Activated CD4-positive, alpha-beta T cell treated with anti-CD3 and anti-CD28 coated beads, Interleukin-2, amount 10 ng/mL, durations not matched to agents 24 days and 14 days (primary cell): ENCODE measurements at regions of chr5 and their contacts with region 1.

Region 1: DNA sequence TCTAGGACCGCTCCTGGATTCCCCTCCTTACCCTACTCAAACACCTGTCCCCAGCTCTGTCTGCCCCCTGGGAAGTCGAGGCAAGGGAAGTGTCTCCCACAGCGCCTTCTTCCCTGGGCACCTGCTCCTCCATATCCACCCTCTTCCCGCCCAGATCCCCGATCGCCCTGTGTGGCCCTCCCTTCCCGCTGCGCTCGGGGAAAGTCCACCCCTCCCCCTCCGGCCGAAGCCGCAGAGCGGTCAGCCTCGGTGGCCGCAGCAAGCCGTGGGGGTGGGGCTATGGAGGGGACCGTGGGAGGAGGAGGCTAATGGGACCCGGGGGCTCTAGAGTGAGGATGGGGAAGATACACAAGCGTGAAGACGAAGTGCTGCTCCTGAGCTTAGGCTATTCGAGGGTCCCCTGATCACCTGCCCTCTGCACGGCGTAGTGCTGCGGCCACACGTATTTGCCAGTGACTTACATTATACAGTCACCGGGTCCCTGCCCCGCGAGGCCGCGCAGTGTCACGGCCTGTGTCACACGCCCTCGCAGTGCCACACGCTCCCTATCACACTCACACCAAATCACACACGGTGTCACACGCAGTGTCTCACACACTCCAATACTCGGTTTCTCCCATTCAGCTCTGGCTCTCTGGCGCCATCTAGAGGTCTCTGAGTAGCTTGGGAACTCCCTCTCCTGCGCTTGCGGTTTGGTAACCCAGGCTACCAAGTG is 658 bp upstream of the PCDH1 start:
- DNase-seq: peak; percentile 97
- H3K4me3 Mint-ChIP-seq: peak overlapping the region; percentile 79
- H3K27ac Mint-ChIP-seq: peak overlapping the region; percentile 39
- H3K4me1 Mint-ChIP-seq: peaks cover 22% of the 10 kb centered on the region
- H3K27me3 Mint-ChIP-seq: peaks cover 78% of the 10 kb centered on the region

Region 2: GRCh38 chr5:141664732-141665461 is 214.0 kb before region 1 on chr5:
- intact Hi-C with region 1: loop called (anchors 1 kb)
- DNase-seq: peak; percentile 93
- H3K4me3 Mint-ChIP-seq: no peak overlapping the region
- H3K27ac Mint-ChIP-seq: peak overlapping the region; percentile 26
- H3K4me1 Mint-ChIP-seq: peaks cover 4% of the 10 kb centered on the region
- H3K27me3 Mint-ChIP-seq: no peaks in the 10 kb centered on the region

Region 3: GRCh38 chr5:141701360-141702119 is 177.3 kb before region 1 on chr5:
- intact Hi-C with region 1: loop called (anchors 1 kb)
- DNase-seq: no peak
- H3K4me3 Mint-ChIP-seq: peak overlapping the region; percentile 82
- H3K27ac Mint-ChIP-seq: no peak overlapping the region
- H3K4me1 Mint-ChIP-seq: peaks cover 18% of the 10 kb centered on the region
- H3K27me3 Mint-ChIP-seq: peaks cover 47% of the 10 kb centered on the region

Region 4: DNA sequence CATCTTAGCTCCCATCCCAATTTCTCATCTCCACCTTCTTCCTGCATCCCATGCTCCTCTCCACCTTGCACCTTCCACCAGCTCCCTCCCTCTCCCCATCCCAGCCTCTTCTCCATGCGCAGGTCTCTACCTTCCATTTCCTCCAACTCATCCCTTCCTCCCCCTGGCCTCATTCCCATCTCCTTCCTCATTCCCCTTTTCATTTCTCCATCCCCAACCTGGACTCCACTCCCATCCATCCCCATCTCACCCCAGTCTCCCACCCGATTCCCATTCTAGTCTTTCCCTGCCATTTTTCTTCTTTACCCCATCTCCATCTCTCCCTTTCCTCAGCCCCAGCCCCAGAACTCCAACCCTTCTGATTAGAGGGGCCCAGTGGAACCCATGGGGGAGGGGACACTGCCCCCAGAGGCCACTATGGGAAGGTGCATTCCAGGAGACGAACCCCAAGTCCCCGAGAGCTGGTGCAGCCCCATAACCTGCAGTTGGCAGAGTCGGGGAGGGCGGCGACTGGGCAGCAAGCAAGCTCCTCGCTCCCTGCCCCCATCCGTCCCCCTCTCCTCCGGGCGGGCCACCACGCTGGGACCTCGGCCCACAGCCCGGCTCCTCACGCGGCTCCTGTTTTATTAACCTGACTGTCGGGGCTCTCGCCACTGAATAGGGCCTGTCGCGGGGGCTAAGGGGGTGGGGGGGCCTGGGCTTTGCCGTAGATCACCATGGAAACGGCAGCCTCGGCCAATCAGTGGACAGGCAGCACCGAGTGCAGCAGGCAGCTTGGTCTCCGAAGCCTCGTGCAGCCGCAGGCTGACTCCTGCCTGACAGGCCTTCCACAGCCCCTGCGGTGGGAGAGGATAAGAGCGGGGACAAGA is 67.3 kb before region 1 on chr5:
- intact Hi-C with region 1: loop called (anchors 5 kb)
- DNase-seq: peak; percentile 72
- H3K4me3 Mint-ChIP-seq: no peak overlapping the region
- H3K27ac Mint-ChIP-seq: no peak overlapping the region
- H3K4me1 Mint-ChIP-seq: no peaks in the 10 kb centered on the region
- H3K27me3 Mint-ChIP-seq: peaks cover 49% of the 10 kb centered on the region

Region 5: DNA sequence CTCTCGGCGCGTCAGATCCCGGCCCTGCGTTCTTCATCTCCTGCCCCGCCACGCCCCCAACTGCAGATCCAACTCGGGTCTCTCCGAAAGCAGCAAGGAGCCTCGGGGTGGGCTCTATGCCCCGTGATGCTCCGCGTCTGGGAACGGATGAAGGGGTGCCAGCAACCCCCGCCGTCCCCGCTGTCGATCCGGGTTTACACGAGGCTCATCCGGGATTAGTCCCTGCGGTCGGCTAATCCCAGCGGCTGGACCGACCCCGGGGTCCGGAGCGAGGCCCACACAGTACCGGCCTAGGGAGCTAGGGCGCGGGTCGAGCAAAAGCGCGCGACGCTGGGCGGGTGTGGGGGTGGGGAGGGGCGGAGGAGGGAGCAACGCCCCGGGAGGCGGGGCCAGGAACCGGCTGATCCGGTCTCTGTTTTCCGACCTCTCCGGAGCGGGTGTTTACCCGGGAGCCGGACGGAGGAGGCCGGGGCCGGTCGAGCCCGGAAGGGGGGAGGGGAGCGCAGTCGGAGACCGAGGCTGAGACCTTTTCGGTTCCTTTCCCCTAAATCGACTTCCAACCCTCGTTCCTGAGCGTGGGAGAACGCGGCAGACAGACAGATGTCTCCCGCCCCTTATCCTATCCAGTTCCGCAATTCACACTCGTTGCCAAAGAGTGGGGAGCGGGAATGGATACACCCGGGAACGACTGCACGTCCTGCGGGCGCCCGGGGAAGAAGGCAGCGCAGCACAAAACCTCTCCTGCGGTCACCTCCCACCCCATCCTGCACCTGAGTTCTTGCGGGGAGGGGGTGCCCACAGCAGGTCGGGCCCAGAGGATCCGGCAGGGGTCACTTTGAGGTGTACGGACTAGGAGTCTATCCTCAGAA is 29.3 kb before region 1 on chr5:
- intact Hi-C with region 1: loop called (anchors 2 kb)
- DNase-seq: peak; percentile 92
- H3K4me3 Mint-ChIP-seq: peak overlapping the region; percentile 87
- H3K27ac Mint-ChIP-seq: peak overlapping the region; percentile 85
- H3K4me1 Mint-ChIP-seq: peaks cover 23% of the 10 kb centered on the region
- H3K27me3 Mint-ChIP-seq: no peaks in the 10 kb centered on the region

Region 6: DNA sequence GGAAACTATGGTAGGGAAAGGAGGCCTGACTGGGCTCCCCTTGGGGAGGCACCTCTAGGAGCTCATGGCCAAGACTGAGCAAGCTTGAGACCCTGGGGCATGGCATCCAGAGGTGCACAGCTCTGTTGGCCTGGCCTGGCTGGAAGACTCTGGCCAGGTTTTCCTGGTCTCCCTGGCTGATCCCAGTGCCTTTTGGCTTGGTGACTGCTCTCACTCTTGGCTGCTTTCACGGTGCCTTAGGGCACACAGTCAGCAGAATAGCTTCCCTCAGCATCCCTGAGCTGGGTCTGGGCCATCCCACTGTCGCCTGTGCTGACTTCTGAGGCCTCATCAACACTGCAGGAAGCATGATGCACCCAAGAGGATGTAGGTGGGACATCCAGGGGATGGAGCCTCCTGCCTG is 31.4 kb after region 1 on chr5:
- intact Hi-C with region 1: no loop called
- DNase-seq: no peak
- H3K4me3 Mint-ChIP-seq: no peak overlapping the region
- H3K27ac Mint-ChIP-seq: no peak overlapping the region
- H3K4me1 Mint-ChIP-seq: peaks cover 6% of the 10 kb centered on the region
- H3K27me3 Mint-ChIP-seq: peaks cover 36% of the 10 kb centered on the region

Region 7: DNA sequence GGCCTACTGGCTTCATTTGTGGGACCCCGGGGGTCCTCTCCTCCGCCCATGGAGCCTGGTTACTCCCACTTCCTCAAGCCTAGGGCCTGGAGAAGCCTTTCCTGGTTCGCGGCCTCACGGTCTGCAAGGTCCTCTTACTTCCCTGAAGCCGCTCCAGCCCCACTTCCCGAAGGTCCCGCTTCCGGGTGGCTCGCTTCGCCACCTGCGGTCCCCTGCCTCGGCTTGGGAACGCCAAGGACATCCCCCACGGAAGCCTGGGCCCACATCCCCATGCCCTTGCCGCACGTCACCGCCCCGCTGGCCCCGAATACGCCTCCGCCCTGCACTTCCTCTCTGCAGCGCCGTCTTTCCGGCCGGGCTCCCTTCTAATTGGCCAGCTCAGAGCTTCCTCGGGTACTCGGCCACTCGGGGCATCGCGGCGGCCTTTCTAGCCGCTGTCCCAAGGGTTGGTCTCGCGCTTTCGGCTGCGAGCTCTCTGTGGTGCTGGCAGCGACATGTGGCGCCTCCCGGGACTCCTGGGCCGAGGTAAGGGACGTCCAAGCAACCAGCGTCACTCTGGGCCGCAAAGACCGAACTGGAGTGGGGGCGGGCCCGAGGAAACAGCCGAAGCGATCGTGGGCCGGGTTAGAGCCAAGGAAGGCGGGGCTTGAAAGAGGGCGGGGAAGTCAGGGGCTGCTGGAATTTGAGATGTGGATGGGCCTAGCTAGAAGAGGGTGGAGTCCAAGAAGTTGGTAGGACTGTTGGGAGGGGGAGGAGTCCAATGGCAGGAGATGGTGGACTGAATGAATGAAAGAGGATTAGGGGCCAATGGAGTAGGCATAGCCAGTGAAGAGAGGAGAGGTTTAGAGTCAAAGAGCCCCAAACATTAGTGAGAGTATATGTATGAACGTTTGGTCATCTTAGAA is 44.8 kb after region 1 on chr5 and contains the start of gene DELE1:
- intact Hi-C with region 1: loop called (anchors 2 kb)
- DNase-seq: peak; percentile 97
- H3K4me3 Mint-ChIP-seq: peak within 1 kb of the TSS; percentile 86
- H3K27ac Mint-ChIP-seq: peak within 1 kb of the TSS; percentile 87
- H3K4me1 Mint-ChIP-seq: peaks cover 31% of the 10 kb centered on the region
- H3K27me3 Mint-ChIP-seq: no peaks in the 10 kb centered on the region
- total RNA-seq, gene DELE1: 66.7 and 72.0 TPM in 2 replicates

Region 8: GRCh38 chr5:141960449-141961202 is 81.8 kb after region 1 on chr5:
- intact Hi-C with region 1: loop called (anchors 2 kb)
- DNase-seq: peak; percentile 97
- H3K4me3 Mint-ChIP-seq: peak overlapping the region; percentile 69
- H3K27ac Mint-ChIP-seq: peak overlapping the region; percentile 90
- H3K4me1 Mint-ChIP-seq: peaks cover 39% of the 10 kb centered on the region
- H3K27me3 Mint-ChIP-seq: no peaks in the 10 kb centered on the region